ENCODE measurements at regions of chr2 and their contacts with region 1.

Region 1: DNA sequence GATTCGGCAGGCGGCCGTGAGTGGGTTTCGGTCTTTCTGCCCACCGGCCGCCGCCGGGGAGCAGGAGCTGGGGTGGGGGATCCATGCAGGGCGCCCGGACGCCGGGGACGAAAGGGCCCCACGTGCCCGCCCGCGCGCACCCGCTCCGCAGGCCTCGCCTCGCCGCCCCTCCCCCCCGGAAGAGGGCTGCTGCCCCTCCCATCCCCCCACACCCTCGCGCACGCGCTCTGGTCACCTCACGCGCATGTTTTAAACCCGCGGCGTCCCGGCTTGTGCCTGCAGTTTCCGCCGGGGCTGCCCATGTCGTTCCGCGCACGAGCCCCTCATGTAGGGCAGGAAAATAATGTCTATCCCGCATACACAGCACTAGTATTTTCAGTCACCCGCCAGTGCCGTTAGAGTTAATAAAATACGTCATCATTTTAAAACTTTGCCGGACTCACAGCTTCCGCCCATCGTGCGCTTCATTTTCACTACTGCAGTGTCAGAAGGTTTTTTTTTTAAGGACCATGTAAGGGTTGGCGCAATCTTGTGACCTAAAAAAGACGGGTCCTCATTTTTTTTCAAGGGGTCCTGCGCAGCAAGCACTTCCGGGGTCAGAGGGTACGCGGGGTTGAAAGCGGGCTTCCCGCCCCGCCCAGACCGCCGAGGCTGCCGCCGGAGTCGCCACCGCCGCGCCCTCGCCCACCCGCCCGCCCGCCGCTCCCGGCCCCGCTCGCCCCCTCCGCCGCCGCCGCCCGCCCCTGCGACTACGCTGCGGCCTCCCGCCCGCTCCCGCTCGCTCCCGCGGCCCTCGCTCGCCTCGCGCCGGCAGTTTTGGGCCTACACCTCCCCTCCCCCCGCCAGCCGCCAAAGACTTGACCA is at the start of gene PCBP1:
- DNase-seq: peak; percentile 87 to 93 (median 93)
- H3K4me3 ChIP-seq: peak within 1 kb of the TSS; percentile 94 to 100 (median 95)
- H3K4me3 Mint-ChIP-seq: peak within 1 kb of the TSS; percentile 98 to 99
- H3K27ac ChIP-seq: peak within 1 kb of the TSS; percentile 99
- H3K27ac Mint-ChIP-seq: peak within 1 kb of the TSS; percentile 100
- H3K4me1 ChIP-seq: peaks cover 55 to 67% of the 10 kb centered on the region in 2 donors
- H3K4me1 Mint-ChIP-seq: peaks cover 56% of the 10 kb centered on the region
- H3K27me3 ChIP-seq: no peaks in the 10 kb centered on the region
- H3K27me3 Mint-ChIP-seq: peaks cover 0 to 5% (median 0%) of the 10 kb centered on the region in 3 donors
- CTCF ChIP-seq: no peak
- polyA plus RNA-seq, gene PCBP1: 178 to 299 (median 194) TPM

Region 2: DNA sequence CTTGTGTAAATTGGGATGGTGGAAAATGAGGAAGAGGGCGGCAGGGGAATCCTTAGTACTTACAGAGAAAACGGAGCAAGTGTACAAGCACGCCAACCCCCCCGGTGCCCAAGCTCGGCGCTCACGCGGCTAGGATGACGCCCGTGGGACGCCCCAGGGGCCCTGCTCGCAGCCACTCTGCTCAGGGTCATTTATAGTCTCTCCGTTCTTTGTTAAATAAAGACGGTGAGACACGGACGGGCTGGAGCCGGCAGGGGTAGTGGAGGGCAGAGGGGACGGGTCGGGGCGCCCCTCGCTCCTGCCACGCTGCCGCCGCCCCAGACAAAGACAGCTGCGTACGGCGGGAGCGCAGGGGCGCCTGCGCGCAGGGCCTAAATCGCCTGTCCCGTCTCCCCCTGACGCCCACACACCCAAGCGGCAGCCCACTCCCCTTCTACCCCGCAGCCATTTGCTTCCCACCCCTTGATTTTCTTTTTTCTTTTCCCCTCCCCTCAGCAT is 38.0 kb after region 1 on chr2:
- intact Hi-C with region 1: loop called in 1 of 2 experiments (anchors 2 kb)
- DNase-seq: peak; percentile 87 to 98 (median 94)
- H3K4me3 ChIP-seq: peak overlapping the region; percentile 42 to 81 (median 70)
- H3K4me3 Mint-ChIP-seq: peak overlapping the region; percentile 86 to 96
- H3K27ac ChIP-seq: peak overlapping the region; percentile 99 to 100
- H3K27ac Mint-ChIP-seq: peak overlapping the region; percentile 100
- H3K4me1 ChIP-seq: peaks cover 60 to 69% of the 10 kb centered on the region in 2 donors
- H3K4me1 Mint-ChIP-seq: peaks cover 68% of the 10 kb centered on the region
- H3K27me3 ChIP-seq: no peaks in the 10 kb centered on the region
- H3K27me3 Mint-ChIP-seq: peaks cover 0 to 4% (median 0%) of the 10 kb centered on the region in 3 donors
- CTCF ChIP-seq: no peak

Measured in CD14-positive monocyte (primary cell).